ENCODE measurements at regions of chr6 and their contacts with region 1.

Region 1: DNA sequence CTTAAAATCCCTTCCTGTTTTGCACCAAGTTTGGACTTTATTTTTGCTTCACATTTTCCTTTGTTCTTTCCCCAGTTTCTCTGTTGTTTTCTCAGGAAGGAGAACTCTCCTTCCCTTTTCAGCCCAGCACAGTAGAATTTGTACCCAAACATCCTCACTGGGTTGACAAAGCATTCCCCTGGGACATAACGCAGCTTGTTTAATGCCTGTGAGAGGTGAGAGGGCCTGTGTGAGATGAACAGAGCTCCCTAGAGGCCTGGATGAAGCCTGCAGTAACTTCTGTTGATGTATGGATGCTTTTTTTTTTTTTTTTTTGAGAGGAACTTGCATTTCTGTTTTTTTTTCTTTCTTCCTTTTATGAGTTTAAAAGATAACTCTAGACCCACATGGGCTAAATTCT is 104.9 kb upstream of the SLC22A23 start:
- DNase-seq: no peak
- ATAC-seq: no peak
- H3K4me3 ChIP-seq: no peak overlapping the region
- H3K27ac ChIP-seq: no peak overlapping the region
- H3K4me1 ChIP-seq: no peaks in the 10 kb centered on the region
- H3K27me3 ChIP-seq: no peaks in the 10 kb centered on the region
- CTCF ChIP-seq: no peak

Region 2: GRCh38 chr6:3506199-3506598 is 55.5 kb before region 1 on chr6:
- intact Hi-C with region 1: no loop called
- DNase-seq: no peak
- ATAC-seq: no peak
- H3K4me3 ChIP-seq: no peak overlapping the region
- H3K27ac ChIP-seq: no peak overlapping the region
- H3K4me1 ChIP-seq: no peaks in the 10 kb centered on the region
- H3K27me3 ChIP-seq: no peaks in the 10 kb centered on the region
- CTCF ChIP-seq: no peak

Region 3: DNA sequence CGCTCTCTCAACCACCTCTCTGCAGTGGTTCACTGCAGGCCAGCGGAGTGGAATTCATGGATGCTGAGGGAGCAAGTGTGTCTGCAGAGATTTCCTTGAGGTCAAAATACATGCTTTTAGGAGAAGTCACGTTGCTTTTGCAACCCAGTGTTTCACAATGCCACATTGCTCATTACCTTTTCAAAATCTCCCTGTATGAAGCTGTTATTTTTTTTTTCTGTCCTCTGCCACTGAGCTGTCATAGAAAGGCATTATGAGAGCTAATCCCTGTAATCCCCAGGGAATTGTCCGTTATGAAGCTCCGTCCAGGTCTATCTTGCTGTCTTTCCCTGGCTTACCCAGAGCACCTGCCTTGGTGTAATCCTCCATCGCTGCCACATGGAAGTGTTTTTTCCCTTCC is 44.4 kb before region 1 on chr6:
- intact Hi-C with region 1: no loop called
- DNase-seq: no peak
- ATAC-seq: peak; percentile 13 to 51 (median 24)
- H3K4me3 ChIP-seq: no peak overlapping the region
- H3K27ac ChIP-seq: no peak overlapping the region
- H3K4me1 ChIP-seq: no peaks in the 10 kb centered on the region
- H3K27me3 ChIP-seq: peaks cover 0 to 2% (median 0%) of the 10 kb centered on the region in 3 donors
- CTCF ChIP-seq: no peak

Region 4: GRCh38 chr6:3612341-3613041 is 50.8 kb after region 1 on chr6:
- intact Hi-C with region 1: no loop called
- DNase-seq: no peak
- ATAC-seq: peak; percentile 90 to 95 (median 92)
- H3K4me3 ChIP-seq: no peak overlapping the region
- H3K27ac ChIP-seq: peak overlapping the region; percentile 59
- H3K4me1 ChIP-seq: no peaks in the 10 kb centered on the region
- H3K27me3 ChIP-seq: no peaks in the 10 kb centered on the region
- CTCF ChIP-seq: no peak

Region 5: GRCh38 chr6:3707024-3707423 is 145.3 kb after region 1 on chr6:
- intact Hi-C with region 1: loop called in 1 of 2 experiments (anchors 10 kb)
- DNase-seq: no peak
- ATAC-seq: no peak
- H3K4me3 ChIP-seq: no peak overlapping the region
- H3K27ac ChIP-seq: no peak overlapping the region
- H3K4me1 ChIP-seq: no peaks in the 10 kb centered on the region
- H3K27me3 ChIP-seq: no peaks in the 10 kb centered on the region
- CTCF ChIP-seq: no peak